Calu3 (cell line): ENCODE measurements at regions of chr18 and their contacts with region 1.

Region 1: GRCh38 chr18:63505566-63506335 is 29.0 kb downstream of the SERPINB5 start:
- DNase-seq: peak; percentile 66
- H3K4me3 Mint-ChIP-seq: no peak overlapping the region
- H3K27ac Mint-ChIP-seq: peak overlapping the region; percentile 40
- H3K4me1 Mint-ChIP-seq: no peaks in the 10 kb centered on the region
- H3K27me3 Mint-ChIP-seq: no peaks in the 10 kb centered on the region
- CTCF ChIP-seq: peak; percentile 74

Region 2: DNA sequence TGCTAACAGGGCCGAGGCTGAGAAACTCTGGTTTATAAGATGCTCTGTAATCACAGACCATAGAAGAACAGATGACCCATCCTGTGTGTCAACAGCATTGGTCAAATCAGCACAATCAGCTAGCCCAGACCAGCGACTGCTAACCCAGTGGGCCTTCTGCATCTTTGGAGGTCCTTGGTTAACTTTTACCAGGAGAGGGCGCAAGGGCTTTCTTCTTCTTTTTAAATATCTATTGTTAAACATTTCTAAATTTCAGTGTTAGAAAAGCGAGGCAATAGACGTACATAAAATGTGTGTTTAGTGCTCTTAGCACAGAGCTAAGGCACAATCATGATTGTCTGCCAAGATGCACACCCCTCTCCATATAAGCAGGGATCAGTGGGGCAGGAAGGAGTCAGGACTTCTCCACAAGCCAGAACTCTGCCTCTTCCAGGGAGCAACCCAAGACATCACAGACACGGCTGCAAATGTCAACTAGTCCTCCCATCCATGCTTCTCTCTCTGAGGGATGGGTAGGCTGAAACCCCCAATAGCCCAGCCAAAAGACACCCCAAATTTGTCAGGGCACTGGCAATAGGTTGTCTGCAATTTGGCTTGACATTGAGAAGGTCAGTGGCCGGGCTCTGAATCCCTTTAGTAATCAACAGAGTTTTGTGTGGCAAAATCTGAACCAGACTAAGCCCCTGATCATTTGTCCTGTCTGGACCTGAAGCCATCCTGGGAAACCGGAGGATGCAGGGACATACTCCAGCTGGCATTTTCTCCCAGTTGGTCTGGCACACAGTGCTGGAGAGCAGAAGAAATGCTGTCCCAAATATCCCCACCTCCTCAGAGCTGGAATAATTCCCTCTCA is 374.4 kb before region 1 on chr18:
- CTCF ChIA-PET with region 1: no interaction called
- intact Hi-C with region 1: loop called (anchors 1 kb)
- DNase-seq: peak; percentile 56
- H3K4me3 Mint-ChIP-seq: no peak overlapping the region
- H3K27ac Mint-ChIP-seq: no peak overlapping the region
- H3K4me1 Mint-ChIP-seq: no peaks in the 10 kb centered on the region
- H3K27me3 Mint-ChIP-seq: peaks cover 21% of the 10 kb centered on the region
- CTCF ChIP-seq: peak; percentile 51

Region 3: GRCh38 chr18:63422087-63422809 is 83.5 kb before region 1 on chr18 and contains the start of gene VPS4B:
- CTCF ChIA-PET with region 1: no interaction called
- intact Hi-C with region 1: loop called (anchors 5 kb)
- DNase-seq: peak; percentile 99
- H3K4me3 Mint-ChIP-seq: peak within 1 kb of the TSS; percentile 89
- H3K27ac Mint-ChIP-seq: peak within 1 kb of the TSS; percentile 85
- H3K4me1 Mint-ChIP-seq: peaks cover 23% of the 10 kb centered on the region
- H3K27me3 Mint-ChIP-seq: no peaks in the 10 kb centered on the region
- CTCF ChIP-seq: no peak
- total RNA-seq, gene VPS4B: 83.3 and 83.9 TPM in 2 replicates